CD14-positive monocyte (primary cell): ENCODE measurements at regions of chr22 and their contacts with region 1.

Region 1: GRCh38 chr22:50148991-50149721 is 21.4 kb upstream of the PANX2 start:
- DNase-seq: peak; percentile 76 to 83 (median 79)
- H3K4me3 ChIP-seq: peak overlapping the region in 1 of 3 experiments; percentile 52
- H3K4me3 Mint-ChIP-seq: peak overlapping the region; percentile 57 to 79
- H3K27ac ChIP-seq: no peak overlapping the region
- H3K27ac Mint-ChIP-seq: peak overlapping the region in 4 of 7 donors; percentile 10 to 70 (median 54)
- H3K4me1 ChIP-seq: peaks cover 35 to 38% of the 10 kb centered on the region in 2 donors
- H3K4me1 Mint-ChIP-seq: peaks cover 46% of the 10 kb centered on the region
- H3K27me3 ChIP-seq: no peaks in the 10 kb centered on the region
- H3K27me3 Mint-ChIP-seq: peaks cover 0 to 6% (median 0%) of the 10 kb centered on the region in 3 donors
- CTCF ChIP-seq: peak; percentile 98

Region 2: DNA sequence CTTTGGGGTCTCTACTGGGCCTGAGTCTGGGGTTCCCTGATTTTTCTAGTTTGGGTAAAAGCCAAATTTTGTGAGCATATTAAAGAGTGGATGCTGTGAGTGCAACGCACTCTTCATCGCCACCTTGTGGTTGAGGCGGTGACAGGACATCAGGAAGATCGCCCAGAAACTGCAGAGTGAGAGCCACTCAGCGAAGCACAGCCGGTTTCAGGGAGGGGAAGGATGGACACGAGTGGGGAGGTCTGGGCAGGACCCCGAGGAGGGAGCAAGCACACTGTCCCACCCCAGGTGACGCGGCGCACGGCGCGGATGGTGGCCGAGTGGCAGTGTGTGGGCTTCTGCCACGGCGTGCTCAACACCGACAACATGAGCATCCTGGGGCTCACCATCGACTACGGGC is 60.7 kb after region 1 on chr22:
- intact Hi-C with region 1: loop called (anchors 1 kb)
- DNase-seq: peak; percentile 63 to 76 (median 67)
- H3K4me3 ChIP-seq: no peak overlapping the region
- H3K4me3 Mint-ChIP-seq: no peak overlapping the region
- H3K27ac ChIP-seq: no peak overlapping the region
- H3K27ac Mint-ChIP-seq: peak overlapping the region in 2 of 7 donors; percentile 37 to 79
- H3K4me1 ChIP-seq: peaks cover 27 to 34% of the 10 kb centered on the region in 2 donors
- H3K4me1 Mint-ChIP-seq: peaks cover 28% of the 10 kb centered on the region
- H3K27me3 ChIP-seq: no peaks in the 10 kb centered on the region
- H3K27me3 Mint-ChIP-seq: no peaks in the 10 kb centered on the region
- CTCF ChIP-seq: peak; percentile 82